Adrenal gland (tissue), 19 donors: ENCODE measurements at regions of chr9 and their contacts with region 1.

Region 1: DNA sequence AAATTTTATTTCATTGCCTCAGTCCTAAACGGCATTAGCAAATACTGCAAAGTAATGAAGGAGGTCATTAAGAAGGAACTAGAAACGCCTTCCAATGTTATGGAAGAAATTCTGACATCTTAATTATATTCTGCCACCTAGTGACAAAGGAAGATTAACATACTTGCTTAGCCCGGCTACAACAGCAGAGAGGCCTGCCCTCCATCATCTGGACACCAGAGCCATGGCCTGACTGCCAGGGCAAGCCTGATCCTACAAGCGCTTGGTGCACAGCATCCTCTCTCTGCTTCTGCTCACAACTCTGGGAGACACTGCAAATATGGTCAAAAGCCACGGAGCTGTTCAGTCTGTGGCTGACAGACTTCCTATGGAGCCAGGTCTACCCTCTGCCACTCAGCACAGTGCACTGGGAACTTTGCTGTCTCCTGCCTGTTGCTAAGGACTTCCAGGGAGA is 87.3 kb upstream of the SLC44A1 start:
- DNase-seq: peak; percentile 62 to 86 (median 72)
- H3K4me3 ChIP-seq: no peak overlapping the region
- H3K27ac ChIP-seq: peak overlapping the region in 1 of 5 donors; percentile 40
- H3K4me1 ChIP-seq: no peaks in the 10 kb centered on the region
- H3K27me3 ChIP-seq: no peaks in the 10 kb centered on the region
- CTCF ChIP-seq: peak; percentile 8 to 75 (median 58)
- POLR2A ChIP-seq: no peak

Region 2: DNA sequence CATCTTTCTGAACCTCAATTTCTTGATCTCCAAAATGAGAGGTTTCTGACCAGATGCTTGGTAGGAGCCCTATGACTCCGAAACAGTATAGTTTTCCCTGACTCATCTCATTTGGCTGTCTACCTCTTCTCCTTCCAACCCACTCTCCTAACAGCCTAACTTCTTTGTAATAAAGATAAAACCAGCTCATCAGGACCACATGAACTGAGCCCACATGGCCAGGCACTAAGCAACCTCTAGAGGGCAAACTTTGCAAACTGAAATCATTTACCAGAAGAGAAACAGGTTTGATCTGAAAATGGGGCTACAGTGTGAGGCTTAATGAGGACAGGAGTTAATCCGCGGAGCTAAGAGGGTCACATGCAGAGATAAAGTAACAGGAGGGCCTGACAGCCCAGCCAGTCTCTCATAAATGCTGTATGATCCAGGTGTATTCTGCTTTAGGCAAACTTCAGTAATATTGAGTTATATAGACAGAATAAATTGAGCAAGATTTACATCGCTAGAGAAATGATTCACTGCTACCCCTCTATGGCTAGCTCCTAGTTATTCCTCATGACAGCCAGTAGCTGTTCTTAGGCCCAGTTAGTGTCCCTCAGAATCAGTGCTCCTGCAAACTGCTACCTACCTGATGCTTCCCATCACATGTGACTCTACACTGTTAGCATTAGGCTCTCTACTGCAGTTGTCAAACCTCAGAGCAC is 293.8 kb before region 1 on chr9:
- intact Hi-C with region 1: loop called in 1 of 2 experiments (anchors 10 kb)
- DNase-seq: peak; percentile 50 to 84 (median 63)
- H3K4me3 ChIP-seq: no peak overlapping the region
- H3K27ac ChIP-seq: peak overlapping the region; percentile 8 to 93 (median 47)
- H3K4me1 ChIP-seq: peaks cover 63 to 75% of the 10 kb centered on the region in 2 donors
- H3K27me3 ChIP-seq: no peaks in the 10 kb centered on the region
- CTCF ChIP-seq: peak; percentile 52 to 81 (median 76)
- POLR2A ChIP-seq: no peak

Region 3: DNA sequence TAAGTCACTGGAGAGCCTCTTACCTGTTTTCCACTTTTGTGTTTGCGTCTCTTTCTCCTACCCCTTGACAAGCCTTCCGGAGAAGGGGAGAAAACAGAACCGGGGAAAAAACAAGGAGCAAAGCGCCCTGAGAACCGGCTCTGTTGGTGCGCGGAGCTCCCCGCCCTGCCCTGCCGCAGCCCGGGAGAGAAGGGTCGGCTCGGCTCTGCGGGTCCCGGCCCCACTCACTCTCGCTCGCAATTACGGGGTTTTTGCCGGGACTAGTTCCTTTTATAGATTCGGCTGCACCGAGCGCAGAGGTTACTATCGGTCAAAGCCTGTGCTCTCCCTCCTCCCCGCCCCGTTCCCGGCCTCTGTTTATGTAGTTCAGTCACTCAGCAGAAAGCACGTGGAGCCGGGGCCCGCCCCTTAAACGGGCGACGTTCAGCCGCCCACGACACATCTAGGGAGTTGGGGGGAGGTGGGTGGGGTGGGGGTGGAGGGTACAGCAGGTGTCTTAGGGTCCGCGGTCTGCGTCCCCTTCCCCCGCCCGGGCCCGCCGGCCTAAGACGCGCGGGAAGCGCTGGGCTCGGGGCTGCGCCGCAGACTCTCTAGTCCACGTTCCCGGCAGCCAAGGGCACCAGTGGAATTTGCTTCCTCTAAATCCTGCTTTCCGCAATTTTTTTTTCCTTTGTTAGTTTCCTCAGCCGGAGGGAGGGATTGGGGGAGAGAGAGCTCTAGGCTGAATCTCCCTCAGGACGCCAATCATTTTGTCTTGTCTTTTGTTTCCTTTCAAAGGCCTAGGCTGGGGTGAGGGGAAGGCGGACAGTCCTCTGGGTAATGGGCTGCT is 229.0 kb before region 1 on chr9 and contains the start of gene ABCA1:
- intact Hi-C with region 1: loop called in 1 of 2 experiments (anchors 5 kb)
- DNase-seq: peak; percentile 93 to 99 (median 98)
- H3K4me3 ChIP-seq: peak within 1 kb of the TSS; percentile 48 to 80 (median 68)
- H3K27ac ChIP-seq: peak within 1 kb of the TSS; percentile 82 to 95 (median 89)
- H3K4me1 ChIP-seq: peaks cover 7 to 24% of the 10 kb centered on the region in 2 donors
- H3K27me3 ChIP-seq: no peaks in the 10 kb centered on the region
- CTCF ChIP-seq: no peak
- POLR2A ChIP-seq: peak; percentile 98 to 100
- total RNA-seq, gene ABCA1: 99.4 to 446 (median 180) TPM

Region 4: GRCh38 chr9:105205787-105206495 is 48.8 kb after region 1 on chr9:
- intact Hi-C with region 1: no loop called
- DNase-seq: peak; percentile 41 to 88 (median 71)
- H3K4me3 ChIP-seq: no peak overlapping the region
- H3K27ac ChIP-seq: peak overlapping the region in 4 of 5 donors; percentile 4 to 80 (median 54)
- H3K4me1 ChIP-seq: peaks cover 0 to 5% of the 10 kb centered on the region in 2 donors
- H3K27me3 ChIP-seq: no peaks in the 10 kb centered on the region
- CTCF ChIP-seq: no peak
- POLR2A ChIP-seq: no peak

Region 5: DNA sequence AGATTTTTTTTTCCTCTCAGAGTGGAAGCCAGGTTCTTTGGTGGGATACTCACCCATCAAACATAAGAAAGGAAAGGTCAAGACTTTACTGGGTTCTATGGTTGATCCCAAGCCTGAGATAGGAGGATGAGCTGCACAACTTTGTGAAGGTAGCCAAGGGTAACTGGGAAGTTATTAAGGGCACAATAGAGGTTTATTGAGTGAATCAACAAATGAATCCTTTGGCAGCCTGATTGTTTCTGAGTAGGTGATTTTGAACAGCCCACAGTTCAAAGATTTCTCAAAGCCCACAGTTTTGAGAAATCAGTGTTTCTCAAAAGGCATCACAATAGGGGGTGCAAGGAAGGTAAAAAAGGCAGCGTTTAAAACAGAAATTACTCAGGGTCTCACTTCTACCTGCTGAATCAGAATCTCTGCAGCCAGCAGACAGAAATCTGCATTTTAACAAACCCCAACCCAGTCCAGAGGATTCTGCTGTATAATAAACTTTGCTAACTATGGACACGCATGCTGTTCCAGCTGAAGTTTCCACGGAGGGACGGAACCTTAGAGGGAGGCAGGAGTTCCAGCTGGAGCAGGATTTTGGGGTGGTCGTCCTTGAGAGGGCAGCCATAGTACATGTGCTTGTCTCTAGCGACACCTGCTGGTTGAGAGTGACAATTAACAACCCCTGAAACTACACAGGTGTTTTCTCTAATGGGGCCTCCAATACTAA is 257.9 kb after region 1 on chr9:
- intact Hi-C with region 1: loop called in 1 of 2 experiments (anchors 5 kb)
- DNase-seq: peak; percentile 42 to 76 (median 62)
- H3K4me3 ChIP-seq: no peak overlapping the region
- H3K27ac ChIP-seq: no peak overlapping the region
- H3K4me1 ChIP-seq: peaks cover 3 to 4% of the 10 kb centered on the region in 2 donors
- H3K27me3 ChIP-seq: no peaks in the 10 kb centered on the region
- CTCF ChIP-seq: peak; percentile 83 to 96 (median 92)
- POLR2A ChIP-seq: no peak